Posterior vena cava (tissue), 2 donors: ENCODE measurements at regions of chr21 and their contacts with region 1.

Region 1: GRCh38 chr21:38784459-38785223 is 21.1 kb upstream of the ETS2 start:
- DNase-seq: no peak

Region 2: DNA sequence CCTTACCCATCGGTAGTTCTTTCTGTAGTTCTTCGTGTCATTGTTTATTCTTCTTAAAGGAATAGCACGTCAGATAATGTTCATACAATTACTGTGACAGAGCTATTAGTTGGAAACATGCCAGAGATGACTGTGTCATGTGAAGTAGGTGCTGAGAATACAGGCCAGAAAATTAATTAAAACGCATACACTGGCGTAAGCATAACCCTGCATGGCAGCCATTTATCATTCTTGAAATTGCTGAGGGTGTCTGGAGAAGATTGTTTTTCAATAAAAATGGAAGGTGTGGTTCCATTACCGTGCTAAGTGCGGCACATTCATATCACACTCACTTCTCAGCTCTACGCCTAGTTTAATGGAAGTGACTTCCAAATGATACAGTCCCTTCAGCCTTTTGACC is 28.9 kb after region 1 on chr21:
- intact Hi-C with region 1: loop called in 1 of 2 experiments (anchors 1 kb)
- DNase-seq: no peak